Caco-2 (cell line): ENCODE measurements at regions of chr6 and their contacts with region 1.

Region 1: DNA sequence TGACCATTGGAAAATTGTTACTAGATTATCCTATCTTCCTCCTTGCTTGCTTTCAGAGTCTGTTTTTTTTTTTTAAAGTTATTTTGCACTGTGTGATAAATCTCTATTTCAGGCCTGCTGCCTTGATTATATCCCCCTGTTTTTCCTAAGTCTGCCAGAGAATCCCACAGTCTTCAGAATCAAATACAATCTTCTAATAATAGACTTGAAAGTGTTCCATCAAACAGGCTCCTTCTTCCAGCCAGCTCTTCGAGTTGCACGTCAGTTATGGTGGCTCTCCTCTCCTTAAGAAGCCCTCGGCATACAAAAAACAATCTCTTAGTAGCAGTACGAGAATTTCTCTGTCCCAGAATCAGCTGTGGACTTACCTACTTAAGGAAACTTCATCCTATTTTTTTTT is 92.9 kb upstream of the NOX3 start:
- DNase-seq: no peak
- H3K4me3 ChIP-seq: no peak overlapping the region
- H3K4me3 Mint-ChIP-seq: no peak overlapping the region
- H3K27ac Mint-ChIP-seq: no peak overlapping the region
- H3K4me1 ChIP-seq: no peaks in the 10 kb centered on the region; the same call in 1 of the 2 replicates
- H3K4me1 Mint-ChIP-seq: peaks cover 6% of the 10 kb centered on the region
- H3K27me3 ChIP-seq: no peaks in the 10 kb centered on the region
- H3K27me3 Mint-ChIP-seq: no peaks in the 10 kb centered on the region
- CTCF ChIP-seq: no peak

Region 2: DNA sequence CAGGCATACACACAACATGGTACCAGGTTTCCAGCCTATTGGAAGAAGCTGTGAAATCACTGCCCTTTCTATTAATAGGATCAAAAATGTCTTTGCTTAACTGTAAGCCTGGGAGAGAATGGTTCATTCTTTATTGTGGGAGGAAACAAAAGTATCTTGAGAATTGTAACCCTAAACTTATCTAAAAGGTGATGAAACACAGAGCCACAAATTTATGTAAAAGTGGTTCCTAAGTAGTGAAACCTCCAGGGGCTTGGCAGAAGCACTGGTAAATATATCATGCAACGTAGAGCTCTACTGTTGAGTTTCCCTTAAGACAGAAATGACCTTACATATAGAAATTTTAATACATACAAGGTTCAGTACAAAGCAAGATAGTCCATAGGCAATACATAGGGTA is 75.7 kb before region 1 on chr6:
- CTCF ChIA-PET with region 1: no interaction called
- POLR2A ChIA-PET with region 1: no interaction called
- intact Hi-C with region 1: no loop called
- DNase-seq: no peak
- H3K4me3 ChIP-seq: no peak overlapping the region
- H3K4me3 Mint-ChIP-seq: no peak overlapping the region
- H3K27ac Mint-ChIP-seq: no peak overlapping the region
- H3K4me1 ChIP-seq: no peaks in the 10 kb centered on the region
- H3K4me1 Mint-ChIP-seq: no peaks in the 10 kb centered on the region
- H3K27me3 ChIP-seq: no peaks in the 10 kb centered on the region
- H3K27me3 Mint-ChIP-seq: no peaks in the 10 kb centered on the region
- CTCF ChIP-seq: no peak

Region 3: GRCh38 chr6:155580904-155581303 is 32.3 kb after region 1 on chr6:
- CTCF ChIA-PET with region 1: no interaction called
- POLR2A ChIA-PET with region 1: no interaction called
- intact Hi-C with region 1: loop called (anchors 1 kb)
- DNase-seq: peak in 1 of 2 experiments; percentile 6
- H3K4me3 ChIP-seq: no peak overlapping the region
- H3K4me3 Mint-ChIP-seq: no peak overlapping the region
- H3K27ac Mint-ChIP-seq: no peak overlapping the region
- H3K4me1 ChIP-seq: peaks cover 12% of the 10 kb centered on the region; the same call in 1 of the 2 replicates
- H3K4me1 Mint-ChIP-seq: no peaks in the 10 kb centered on the region
- H3K27me3 ChIP-seq: no peaks in the 10 kb centered on the region
- H3K27me3 Mint-ChIP-seq: no peaks in the 10 kb centered on the region
- CTCF ChIP-seq: no peak